ENCODE measurements at regions of chr16 and their contacts with region 1.

Region 1: GRCh38 chr16:66562407-66562806 is 3.8 kb upstream of the CMTM1 start:
- DNase-seq: peak in 1 of 35 experiments; percentile 51
- ATAC-seq: peak in 3 of 4 experiments; percentile 60 to 78 (median 64)
- H3K4me3 ChIP-seq: no peak overlapping the region
- H3K4me3 Mint-ChIP-seq: no peak overlapping the region
- H3K27ac ChIP-seq: peak overlapping the region; percentile 19
- H3K27ac Mint-ChIP-seq: peak overlapping the region; percentile 78 to 81
- H3K4me1 ChIP-seq: peaks cover 5 to 29% of the 10 kb centered on the region in 2 experiments
- H3K4me1 Mint-ChIP-seq: peaks cover 55 to 67% (median 66%) of the 10 kb centered on the region in 3 donors
- H3K27me3 ChIP-seq: no peaks in the 10 kb centered on the region
- H3K27me3 Mint-ChIP-seq: no peaks in the 10 kb centered on the region

Region 2: DNA sequence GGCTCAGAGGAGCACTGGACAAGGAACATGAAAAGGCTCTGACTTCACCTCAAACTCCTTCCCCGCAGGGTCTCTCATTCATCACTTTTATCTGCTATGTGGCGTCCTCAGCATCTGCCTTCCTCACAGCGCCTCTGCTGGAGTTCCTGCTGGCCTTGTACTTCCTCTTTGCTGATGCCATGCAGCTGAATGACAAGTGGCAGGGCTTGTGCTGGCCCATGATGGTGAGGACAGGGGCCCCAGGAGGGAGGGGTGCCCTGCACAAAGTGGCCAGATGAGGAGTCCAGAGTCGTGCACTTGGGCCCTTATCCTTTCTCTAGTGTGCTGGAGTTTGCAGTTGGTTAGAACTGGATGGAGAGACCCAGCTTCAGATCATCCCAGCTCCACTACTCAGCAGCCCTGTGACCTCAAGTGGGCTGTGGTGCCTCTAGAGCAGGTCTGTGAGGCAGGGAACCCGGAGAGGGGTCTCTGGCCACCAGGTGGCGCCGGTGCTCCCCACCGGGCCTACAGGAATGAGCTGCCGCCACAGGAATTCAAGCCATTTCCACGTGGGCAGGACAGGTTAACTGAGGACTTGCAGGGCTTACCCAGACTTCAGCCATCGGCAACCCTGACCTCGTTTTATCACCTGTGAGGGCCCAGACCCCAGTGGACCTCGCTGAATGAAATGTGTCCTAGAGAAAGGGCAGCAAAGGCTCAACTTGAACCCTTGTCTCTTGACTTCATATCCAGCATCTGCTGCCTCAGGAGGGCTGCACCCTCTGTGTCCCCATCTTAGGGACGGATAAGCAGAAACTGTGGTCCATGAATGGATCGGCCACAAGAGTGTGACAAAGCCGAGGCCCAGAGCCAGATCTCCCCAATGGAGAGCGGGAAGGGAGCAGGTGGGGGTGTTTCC is 46.1 kb after region 1 on chr16:
- CTCF ChIA-PET with region 1: interaction called, 5 to 17 read pairs
- POLR2A ChIA-PET with region 1: no interaction called
- DNase-seq: peak; percentile 53 to 88 (median 73)
- ATAC-seq: peak; percentile 21 to 41 (median 31)
- H3K4me3 ChIP-seq: no peak overlapping the region
- H3K4me3 Mint-ChIP-seq: peak overlapping the region in 2 of 3 donors; percentile 17 to 38
- H3K27ac ChIP-seq: peak overlapping the region; percentile 44
- H3K27ac Mint-ChIP-seq: peak overlapping the region; percentile 83 to 93
- H3K4me1 ChIP-seq: peaks cover 9 to 48% of the 10 kb centered on the region in 2 experiments
- H3K4me1 Mint-ChIP-seq: peaks cover 30 to 38% (median 35%) of the 10 kb centered on the region in 3 donors
- H3K27me3 ChIP-seq: no peaks in the 10 kb centered on the region
- H3K27me3 Mint-ChIP-seq: no peaks in the 10 kb centered on the region

Region 3: DNA sequence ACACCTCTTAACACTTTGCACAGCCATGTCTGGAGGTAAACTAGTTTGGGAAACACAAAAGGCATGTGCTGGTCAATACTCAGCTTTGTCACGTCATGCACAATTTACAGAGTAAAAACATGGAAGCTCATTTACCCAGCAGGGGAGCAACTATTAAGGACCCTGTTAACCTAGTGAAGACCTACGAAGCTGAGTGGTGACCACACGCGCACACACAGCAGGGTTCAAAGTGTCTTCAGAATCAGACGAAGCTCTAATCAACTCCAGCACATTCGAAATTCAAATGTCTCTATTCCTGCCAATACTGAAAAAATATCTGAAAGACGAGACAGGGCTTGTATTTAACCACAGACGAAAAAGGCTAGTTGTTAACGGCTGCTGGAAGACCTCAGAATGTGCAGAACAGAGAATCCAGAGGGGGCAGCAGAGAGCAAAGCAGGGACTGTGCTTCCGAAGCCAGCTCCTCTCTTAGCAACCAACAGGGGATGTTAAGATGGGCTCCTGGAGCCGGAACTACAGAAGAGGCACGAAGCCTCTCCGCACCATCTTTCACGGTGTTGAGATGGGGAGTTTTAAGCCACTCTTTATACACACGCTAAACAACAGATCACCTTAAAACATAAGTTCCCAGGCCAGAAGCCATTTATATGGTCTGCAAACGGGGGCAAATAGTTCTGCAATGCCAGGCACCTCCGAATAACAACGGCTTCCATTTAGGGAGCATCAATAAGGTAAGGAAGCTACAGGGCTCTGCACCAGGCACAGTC is 88.5 kb after region 1 on chr16:
- CTCF ChIA-PET with region 1: interaction called, 5 to 10 read pairs
- POLR2A ChIA-PET with region 1: no interaction called
- DNase-seq: peak; percentile 50 to 91 (median 79)
- ATAC-seq: peak; percentile 99 to 100 (median 99)
- H3K4me3 ChIP-seq: peak overlapping the region; percentile 3 to 35
- H3K4me3 Mint-ChIP-seq: peak overlapping the region; percentile 63 to 72 (median 65)
- H3K27ac ChIP-seq: no peak overlapping the region
- H3K27ac Mint-ChIP-seq: peak overlapping the region in 1 of 2 donors; percentile 62
- H3K4me1 ChIP-seq: peaks cover 0 to 10% of the 10 kb centered on the region in 2 experiments
- H3K4me1 Mint-ChIP-seq: peaks cover 8 to 10% (median 10%) of the 10 kb centered on the region in 3 donors
- H3K27me3 ChIP-seq: peaks cover 0 to 14% of the 10 kb centered on the region in 2 experiments
- H3K27me3 Mint-ChIP-seq: peaks cover 5 to 11% of the 10 kb centered on the region in 2 donors